Activated T-helper 1 cell treated with anti-CD3 and anti-CD28 coated beads, Interleukin-12 subunit alpha, Interleukin-12 subunit beta, Interleukin-2, Interleukin-4 antibody, amounts not matched to agents 30 ng/mL and 10 ng/mL and 1 ng/mL, durations not matched to agents 14 hours and 24 hours and 36 hours (primary cell): ENCODE measurements at regions of chr4 and their contacts with region 1.

Region 1: DNA sequence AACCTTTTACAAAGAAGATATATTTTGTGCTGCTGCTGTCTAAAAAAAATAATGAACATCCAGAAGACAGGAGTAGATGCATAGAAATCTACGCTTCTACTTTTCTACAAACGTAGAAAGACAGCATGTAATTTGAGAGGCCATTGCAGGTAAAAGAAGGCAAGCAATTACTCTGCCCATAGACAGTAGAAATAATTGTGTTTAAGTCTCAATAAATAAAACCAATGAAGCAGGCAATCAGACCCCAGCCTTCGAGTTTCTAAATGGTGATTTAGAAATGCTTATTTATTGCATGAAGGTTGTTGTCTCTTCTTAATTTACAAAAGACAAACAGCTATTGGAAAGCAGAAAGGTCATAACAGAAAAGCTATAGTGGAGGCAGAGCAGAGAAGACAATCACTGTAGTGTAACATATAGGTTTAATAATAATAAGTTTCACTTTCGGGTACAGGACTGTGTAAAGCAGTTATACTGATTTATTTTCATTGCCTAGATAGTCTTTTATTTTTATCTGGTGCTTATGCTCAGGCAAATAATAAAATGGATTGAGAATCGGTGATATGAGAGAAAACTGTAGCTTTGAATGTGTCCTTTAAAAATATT is 123.0 kb upstream of the TACR3 start:
- DNase-seq: no peak
- H3K4me3 Mint-ChIP-seq: no peak overlapping the region
- H3K27ac Mint-ChIP-seq: no peak overlapping the region
- H3K4me1 Mint-ChIP-seq: no peaks in the 10 kb centered on the region
- H3K27me3 Mint-ChIP-seq: no peaks in the 10 kb centered on the region

Region 2: GRCh38 chr4:104682311-104682710 is 839.6 kb after region 1 on chr4:
- intact Hi-C with region 1: loop called (anchors 5 kb)
- DNase-seq: no peak
- H3K4me3 Mint-ChIP-seq: no peak overlapping the region
- H3K27ac Mint-ChIP-seq: no peak overlapping the region
- H3K4me1 Mint-ChIP-seq: no peaks in the 10 kb centered on the region
- H3K27me3 Mint-ChIP-seq: no peaks in the 10 kb centered on the region